ENCODE measurements at regions of chr19 and their contacts with region 1.

Region 1: DNA sequence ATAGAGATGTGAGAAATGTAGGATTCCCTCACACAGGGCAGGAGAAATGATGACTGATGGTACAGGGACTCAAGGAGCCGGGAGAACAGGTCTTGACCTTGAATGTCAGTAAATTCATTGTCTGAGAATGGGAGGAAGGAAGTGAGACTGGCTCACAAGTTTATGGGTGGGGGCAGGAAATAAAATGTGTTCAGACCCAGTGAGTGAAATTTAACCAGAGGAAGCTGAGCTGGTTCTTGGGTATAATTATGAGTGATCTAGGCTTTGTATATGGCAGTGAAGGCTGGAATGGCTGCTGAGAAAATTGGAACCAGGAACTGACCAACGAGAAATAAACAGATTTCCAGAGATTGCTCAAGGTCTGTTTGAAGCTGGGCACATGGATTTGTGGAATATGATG is 6.3 kb upstream of the IGSF23 start:
- DNase-seq: peak; percentile 95
- H3K4me3 ChIP-seq: no peak overlapping the region
- H3K27ac ChIP-seq: peak overlapping the region; percentile 93
- H3K4me1 ChIP-seq: peaks cover 62% of the 10 kb centered on the region
- H3K27me3 ChIP-seq: no peaks in the 10 kb centered on the region
- CTCF ChIP-seq: no peak
- POLR2A ChIP-seq: peak; percentile 63

Region 2: GRCh38 chr19:44530777-44531176 is 76.3 kb before region 1 on chr19:
- CTCF ChIA-PET with region 1: no interaction called
- POLR2A ChIA-PET with region 1: no interaction called
- dilution Hi-C with region 1: no loop called
- intact Hi-C with region 1: no loop called
- DNase-seq: peak; percentile 16
- H3K4me3 ChIP-seq: no peak overlapping the region
- H3K27ac ChIP-seq: no peak overlapping the region
- H3K4me1 ChIP-seq: no peaks in the 10 kb centered on the region
- H3K27me3 ChIP-seq: peaks cover 3 to 6% of the 10 kb centered on the region in 2 experiments
- CTCF ChIP-seq: no peak
- POLR2A ChIP-seq: no peak

Region 3: DNA sequence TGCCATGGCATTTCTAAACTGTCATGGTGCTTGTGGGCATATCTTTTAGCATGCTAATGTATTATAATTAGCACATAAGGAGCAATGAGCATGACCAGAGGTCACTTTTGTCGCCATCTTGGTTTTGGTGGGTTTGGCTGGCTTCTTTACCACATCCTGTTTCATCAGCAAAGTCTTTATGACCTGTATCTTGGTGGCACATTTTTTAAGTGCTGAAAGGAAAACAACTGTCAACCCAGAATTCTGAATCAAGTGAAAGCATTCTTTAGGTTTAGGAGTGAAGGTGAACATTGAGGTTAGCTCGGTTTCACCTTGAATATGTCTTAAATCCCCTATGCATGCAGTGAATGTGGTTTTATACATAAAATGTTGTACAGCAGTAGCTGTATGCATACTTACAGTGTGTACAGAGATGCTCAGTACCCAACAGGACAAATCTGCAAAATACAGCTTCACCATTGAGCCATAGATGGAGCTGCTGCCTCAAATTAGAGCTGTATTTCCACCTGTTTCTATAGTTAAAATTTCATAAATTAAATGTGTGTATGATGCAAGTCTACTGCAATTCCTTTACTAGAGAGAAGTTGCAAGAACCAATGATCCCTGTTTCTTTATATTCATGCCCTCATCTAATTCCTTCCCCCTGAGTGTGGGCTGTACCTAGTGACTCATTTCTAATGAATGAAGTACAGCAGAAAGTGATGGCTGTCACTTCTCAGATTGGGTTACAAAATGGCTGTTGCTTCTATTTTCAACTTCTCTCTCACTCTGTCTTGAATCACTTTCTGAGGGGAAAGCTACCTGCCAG is 18.9 kb before region 1 on chr19:
- CTCF ChIA-PET with region 1: interaction called, 40 read pairs
- POLR2A ChIA-PET with region 1: interaction called, 8 read pairs
- dilution Hi-C with region 1: no loop called
- intact Hi-C with region 1: loop called (anchors 1 kb)
- DNase-seq: peak; percentile 77
- H3K4me3 ChIP-seq: peak overlapping the region in 1 of 3 experiments; percentile 1
- H3K27ac ChIP-seq: peak overlapping the region; percentile 93
- H3K4me1 ChIP-seq: peaks cover 55% of the 10 kb centered on the region
- H3K27me3 ChIP-seq: no peaks in the 10 kb centered on the region
- CTCF ChIP-seq: peak in 1 of 2 donors; percentile 12
- POLR2A ChIP-seq: no peak

Region 4: GRCh38 chr19:44626048-44626624 is 19.1 kb after region 1 on chr19:
- CTCF ChIA-PET with region 1: interaction called, 5 read pairs
- POLR2A ChIA-PET with region 1: interaction called, 4 read pairs
- dilution Hi-C with region 1: no loop called
- intact Hi-C with region 1: loop called (anchors 1 kb)
- DNase-seq: peak; percentile 93
- H3K4me3 ChIP-seq: no peak overlapping the region
- H3K27ac ChIP-seq: peak overlapping the region; percentile 73
- H3K4me1 ChIP-seq: peaks cover 31% of the 10 kb centered on the region
- H3K27me3 ChIP-seq: no peaks in the 10 kb centered on the region
- CTCF ChIP-seq: no peak
- POLR2A ChIP-seq: peak; percentile 60